ENCODE measurements at regions of chr1 and their contacts with region 1.

Region 1: GRCh38 chr1:29396438-29397255 is 160.3 kb downstream of the PTPRU start:
- DNase-seq: peak; percentile 79

Region 2: GRCh38 chr1:29324771-29325668 is 71.6 kb before region 1 on chr1:
- in situ Hi-C with region 1: loop called (anchors 5 kb)
- DNase-seq: no peak

Region 3: DNA sequence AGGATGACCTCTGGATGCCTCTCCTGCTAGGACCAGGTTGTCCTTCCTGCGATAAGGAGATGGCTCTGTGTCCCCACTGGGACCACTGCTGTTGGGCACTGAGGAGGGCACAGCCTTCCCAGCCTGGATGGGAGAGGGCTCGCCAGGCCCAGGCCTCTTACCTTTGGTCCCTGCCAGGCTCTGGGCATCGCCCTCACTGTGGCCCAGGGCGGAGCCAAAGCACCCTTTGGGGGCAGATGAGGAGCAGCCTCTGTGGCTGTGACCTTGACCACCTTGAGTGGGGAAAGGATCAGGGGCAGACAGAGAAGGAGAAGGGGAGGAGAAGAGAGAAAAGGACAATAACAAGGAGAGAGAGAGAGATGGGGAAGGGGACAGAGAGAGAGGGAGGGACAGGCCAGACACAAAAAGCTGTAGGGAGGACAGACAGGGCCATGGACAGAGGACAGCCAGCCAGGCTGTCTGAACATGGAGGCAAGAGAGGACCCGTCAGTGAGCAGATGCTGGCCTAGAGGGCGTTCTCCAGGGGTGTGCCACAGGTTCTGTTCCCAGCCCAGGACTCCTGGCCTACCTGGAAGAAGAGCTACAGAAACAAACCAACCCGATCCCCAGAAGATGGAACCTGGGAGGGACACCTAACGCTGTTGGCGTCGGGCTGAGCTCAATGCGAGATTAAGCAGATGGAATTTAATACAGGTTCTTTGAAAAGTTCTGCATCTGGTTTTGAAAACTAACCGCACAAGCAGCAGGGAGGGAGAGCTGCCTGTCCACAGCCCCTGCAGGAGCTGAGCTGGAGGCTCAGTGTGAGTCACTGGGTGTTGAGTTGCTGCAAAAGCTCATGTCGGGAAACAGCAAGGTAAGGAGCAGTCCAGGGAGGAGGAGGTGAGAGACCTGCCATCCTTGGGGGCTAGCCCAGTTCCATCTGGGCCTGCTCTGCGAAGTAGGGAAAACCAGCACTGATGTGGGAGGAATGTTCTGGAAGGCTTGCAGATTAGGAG is 101.8 kb after region 1 on chr1:
- in situ Hi-C with region 1: no loop called
- DNase-seq: no peak

Measured in G401 (cell line).